Mammary epithelial cell (primary cell): ENCODE measurements at regions of chr15 and their contacts with region 1.

Region 1: GRCh38 chr15:99435113-99435695 is 130.6 kb upstream of the MEF2A start:
- DNase-seq: peak; percentile 65
- H3K4me3 ChIP-seq: peak overlapping the region in 2 of 3 experiments; percentile 22 to 25
- H3K27ac ChIP-seq: peak overlapping the region; percentile 43
- H3K4me1 ChIP-seq: peaks cover 33% of the 10 kb centered on the region
- H3K27me3 ChIP-seq: no peaks in the 10 kb centered on the region
- CTCF ChIP-seq: peak in 1 of 2 donors; percentile 23

Region 2: GRCh38 chr15:99207672-99208071 is 227.5 kb before region 1 on chr15:
- CTCF ChIA-PET with region 1: no interaction called
- dilution Hi-C with region 1: no loop called
- in situ Hi-C with region 1: no loop called
- intact Hi-C with region 1: no loop called
- DNase-seq: no peak
- H3K4me3 ChIP-seq: no peak overlapping the region
- H3K27ac ChIP-seq: no peak overlapping the region
- H3K4me1 ChIP-seq: no peaks in the 10 kb centered on the region
- H3K27me3 ChIP-seq: no peaks in the 10 kb centered on the region
- CTCF ChIP-seq: no peak

Region 3: DNA sequence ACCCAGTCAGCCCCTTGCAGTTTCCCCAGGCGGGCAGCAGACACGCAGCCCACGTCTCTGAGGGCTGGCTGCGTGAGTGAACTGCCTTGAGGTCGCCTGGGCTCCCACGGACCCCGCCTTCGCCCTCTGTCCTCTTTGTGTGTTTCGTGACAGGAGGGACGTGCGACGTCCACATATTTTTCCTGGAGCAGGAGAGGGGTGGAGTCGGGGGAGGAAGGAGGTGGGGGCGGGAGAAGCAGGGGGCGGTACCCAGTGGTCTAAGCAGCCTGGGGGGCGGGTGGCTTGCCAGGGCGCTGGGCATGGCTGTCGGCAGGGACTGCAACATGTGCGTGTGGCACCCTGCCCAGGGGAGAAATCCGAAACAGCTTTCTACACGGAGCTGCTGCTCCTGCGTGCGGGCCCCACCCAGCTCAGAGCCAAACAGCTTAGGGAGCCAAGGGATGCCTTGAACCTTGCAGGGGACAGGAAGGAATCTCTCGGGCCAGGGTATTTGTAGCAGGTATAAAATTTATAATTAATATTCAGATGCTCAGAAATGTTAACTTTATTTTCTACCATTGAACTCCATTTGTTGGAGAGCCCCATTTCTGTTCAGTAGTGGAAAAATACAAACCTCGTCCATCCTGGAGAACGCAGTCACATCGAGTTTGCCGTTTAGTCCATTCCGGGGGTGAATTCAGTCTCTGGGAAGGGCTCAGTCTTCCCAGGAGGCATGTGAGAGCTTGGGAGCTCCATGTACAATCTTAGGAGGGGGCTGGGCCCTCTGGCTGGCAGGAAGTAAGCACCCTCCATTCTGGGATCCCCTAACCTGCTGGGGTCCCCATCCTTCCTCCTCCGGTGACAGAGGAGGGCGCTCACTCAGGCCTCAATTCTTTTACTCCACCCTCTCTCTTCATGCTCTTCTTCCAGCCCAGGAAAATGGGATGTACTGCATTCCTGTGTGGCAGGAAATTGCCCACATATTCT is 51.5 kb after region 1 on chr15:
- CTCF ChIA-PET with region 1: no interaction called
- dilution Hi-C with region 1: loop called (anchors 5 kb)
- in situ Hi-C with region 1: no loop called
- intact Hi-C with region 1: no loop called
- DNase-seq: peak; percentile 23
- H3K4me3 ChIP-seq: peak overlapping the region; percentile 0 to 28 (median 24)
- H3K27ac ChIP-seq: peak overlapping the region; percentile 14
- H3K4me1 ChIP-seq: peaks cover 14% of the 10 kb centered on the region
- H3K27me3 ChIP-seq: no peaks in the 10 kb centered on the region
- CTCF ChIP-seq: no peak

Region 4: GRCh38 chr15:99590913-99591646 is 155.9 kb after region 1 on chr15:
- CTCF ChIA-PET with region 1: no interaction called
- dilution Hi-C with region 1: no loop called
- in situ Hi-C with region 1: no loop called
- intact Hi-C with region 1: no loop called
- DNase-seq: no peak
- H3K4me3 ChIP-seq: no peak overlapping the region
- H3K27ac ChIP-seq: no peak overlapping the region
- H3K4me1 ChIP-seq: no peaks in the 10 kb centered on the region
- H3K27me3 ChIP-seq: no peaks in the 10 kb centered on the region
- CTCF ChIP-seq: no peak